Dendritic cell treated with granulocyte-macrophage colony-stimulating factor and Interleukin-4, amounts not matched to agents 40 ng/mL and 50 ng/mL, for 4 days (primary cell): ENCODE measurements at regions of chr5 and their contacts with region 1.

Region 1: DNA sequence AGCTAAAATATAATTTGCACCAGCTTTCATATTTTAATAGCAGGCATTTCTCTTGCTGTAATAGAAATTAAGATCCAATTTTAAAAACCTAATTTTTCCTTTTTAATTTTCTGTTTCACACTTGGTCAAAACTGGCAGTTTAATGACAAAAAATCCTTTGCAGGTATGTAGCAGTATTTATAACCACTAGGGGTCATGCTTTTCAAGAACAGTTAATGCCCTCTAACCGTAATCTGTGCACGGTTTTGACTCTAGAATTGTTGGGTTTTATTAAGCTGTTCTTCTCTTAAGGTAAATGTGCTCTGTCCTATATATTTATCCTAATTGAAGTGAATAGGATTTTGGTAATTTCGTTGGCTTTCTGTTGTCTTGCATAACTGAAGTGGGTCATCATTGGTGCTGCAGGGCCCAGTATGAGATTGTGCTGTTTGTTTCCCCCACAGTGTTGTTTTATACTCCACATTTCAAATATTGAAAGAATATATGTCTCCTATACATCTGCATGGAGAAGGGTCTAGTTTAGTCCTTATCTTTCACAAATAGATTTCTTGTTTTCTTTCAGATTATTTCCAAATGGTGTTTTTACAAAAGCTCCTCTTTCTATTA is 107.4 kb downstream of the SCAMP1 start:
- H3K4me3 Mint-ChIP-seq: no peak overlapping the region
- H3K27ac Mint-ChIP-seq: no peak overlapping the region
- H3K4me1 Mint-ChIP-seq: no peaks in the 10 kb centered on the region
- H3K27me3 Mint-ChIP-seq: no peaks in the 10 kb centered on the region

Region 2: DNA sequence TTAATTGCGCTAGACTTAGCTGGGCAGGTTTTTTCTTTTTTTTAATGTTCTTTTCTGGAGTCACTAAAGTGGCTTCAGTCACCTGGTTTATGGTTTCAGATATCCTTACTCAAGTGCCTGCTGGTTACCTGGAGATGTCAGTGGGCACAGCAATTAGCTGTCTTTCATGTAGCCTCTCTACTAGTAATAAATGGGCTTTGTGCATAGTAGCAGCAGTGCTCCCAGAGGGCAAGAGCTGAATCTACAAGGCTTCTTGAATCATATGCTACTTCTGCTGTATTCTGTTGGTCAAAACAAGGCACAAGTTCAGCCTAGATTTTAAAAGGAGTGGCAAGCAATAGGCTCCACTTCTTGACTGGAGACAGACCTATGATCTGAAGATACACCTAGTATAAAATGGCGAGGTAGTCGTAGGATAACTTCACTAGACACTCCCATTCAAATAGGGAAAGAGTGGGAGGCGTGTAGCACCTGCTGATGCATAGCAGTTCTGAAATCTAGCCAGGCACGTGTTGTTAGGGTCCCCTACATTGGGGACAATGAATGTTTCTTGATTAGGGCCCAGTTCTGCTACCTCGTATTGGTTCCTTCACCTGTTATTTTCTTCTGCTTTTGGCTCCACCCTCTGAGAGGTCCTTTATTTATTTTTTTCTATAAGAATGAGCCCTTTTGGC is 100.4 kb before region 1 on chr5:
- intact Hi-C with region 1: no loop called
- H3K4me3 Mint-ChIP-seq: no peak overlapping the region
- H3K27ac Mint-ChIP-seq: no peak overlapping the region
- H3K4me1 Mint-ChIP-seq: peaks cover 8% of the 10 kb centered on the region
- H3K27me3 Mint-ChIP-seq: no peaks in the 10 kb centered on the region

Region 3: GRCh38 chr5:78483809-78484521 is 16.1 kb after region 1 on chr5:
- intact Hi-C with region 1: no loop called
- H3K4me3 Mint-ChIP-seq: no peak overlapping the region
- H3K27ac Mint-ChIP-seq: peak overlapping the region; percentile 75
- H3K4me1 Mint-ChIP-seq: peaks cover 38% of the 10 kb centered on the region
- H3K27me3 Mint-ChIP-seq: no peaks in the 10 kb centered on the region

Region 4: GRCh38 chr5:78537821-78538220 is 70.0 kb after region 1 on chr5:
- intact Hi-C with region 1: loop called (anchors 5 kb)
- H3K4me3 Mint-ChIP-seq: no peak overlapping the region
- H3K27ac Mint-ChIP-seq: peak overlapping the region; percentile 99
- H3K4me1 Mint-ChIP-seq: peaks cover 97% of the 10 kb centered on the region
- H3K27me3 Mint-ChIP-seq: no peaks in the 10 kb centered on the region

Region 5: GRCh38 chr5:78627175-78627574 is 159.3 kb after region 1 on chr5:
- intact Hi-C with region 1: loop called (anchors 2 kb)
- H3K4me3 Mint-ChIP-seq: no peak overlapping the region
- H3K27ac Mint-ChIP-seq: no peak overlapping the region
- H3K4me1 Mint-ChIP-seq: peaks cover 29% of the 10 kb centered on the region
- H3K27me3 Mint-ChIP-seq: peaks cover 2% of the 10 kb centered on the region

Region 6: DNA sequence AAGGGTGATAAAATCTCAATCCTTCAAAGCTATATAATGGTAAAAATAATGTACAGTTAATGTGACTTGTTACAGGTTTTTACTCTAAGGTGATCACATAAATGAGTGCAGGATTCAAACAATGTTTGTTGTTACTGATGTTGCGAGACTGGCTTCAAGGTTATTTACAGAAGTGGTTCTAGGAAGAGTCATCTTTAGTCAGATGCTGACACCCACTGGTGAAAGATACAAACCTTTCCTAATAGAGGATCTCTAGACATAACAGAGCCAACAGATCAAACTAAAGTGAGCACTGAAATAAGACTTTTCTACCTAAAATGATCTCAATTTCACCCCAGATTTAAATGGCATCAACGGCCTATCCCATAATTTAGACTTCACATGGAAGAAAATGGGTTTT is 497.0 kb after region 1 on chr5:
- intact Hi-C with region 1: loop called (anchors 5 kb)
- H3K4me3 Mint-ChIP-seq: no peak overlapping the region
- H3K27ac Mint-ChIP-seq: no peak overlapping the region
- H3K4me1 Mint-ChIP-seq: no peaks in the 10 kb centered on the region
- H3K27me3 Mint-ChIP-seq: no peaks in the 10 kb centered on the region